MCF 10A (cell line): ENCODE measurements at regions of chr11 and their contacts with region 1.

Region 1: DNA sequence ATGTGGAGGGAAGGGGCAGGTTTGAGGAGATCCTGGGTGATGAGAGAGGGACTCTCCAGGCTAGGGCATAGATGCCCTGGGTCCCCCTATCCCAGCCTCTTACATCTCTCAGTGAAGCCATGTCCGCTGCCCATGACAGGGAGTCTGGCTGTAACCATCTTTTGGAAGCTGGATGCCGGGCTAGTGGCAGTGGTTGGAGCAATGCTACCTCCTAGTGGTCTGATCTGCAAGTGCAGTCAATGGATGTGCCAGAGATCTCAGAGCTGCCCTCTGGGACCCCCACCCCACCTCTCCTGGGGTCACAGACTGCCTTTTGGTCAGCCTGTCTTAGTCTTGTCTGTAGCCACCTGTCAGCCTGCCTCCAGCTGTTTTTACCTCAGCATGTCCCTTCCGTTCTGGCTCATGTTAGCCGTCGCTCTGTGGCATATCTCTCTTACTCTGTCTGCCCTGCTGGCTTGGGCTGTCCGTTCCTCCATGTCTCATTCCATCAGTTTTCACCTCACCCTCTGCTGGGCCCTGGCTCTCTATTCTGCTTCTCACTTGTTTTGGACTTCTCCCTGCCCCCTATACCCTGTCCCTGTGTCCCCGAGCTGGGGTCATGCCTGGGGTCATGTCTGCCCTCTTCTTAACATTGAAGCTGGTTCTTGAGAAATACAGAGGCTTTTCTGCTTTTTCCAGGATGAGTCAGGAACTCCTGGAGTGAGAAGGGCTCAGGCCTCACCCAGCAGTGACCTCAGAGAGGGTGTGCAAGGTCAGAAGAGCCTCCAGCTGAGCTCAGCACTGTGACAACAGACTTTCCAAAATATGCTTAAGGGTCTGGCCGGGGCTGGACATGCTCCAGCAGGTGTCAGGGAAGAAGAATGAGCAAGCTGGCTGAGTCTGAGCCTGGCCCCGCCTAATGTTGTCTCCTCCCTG is 52.0 kb upstream of the THY1 start:
- DNase-seq: peak; percentile 81
- H3K4me3 Mint-ChIP-seq: peak overlapping the region; percentile 7
- H3K27ac Mint-ChIP-seq: peak overlapping the region; percentile 57
- H3K4me1 Mint-ChIP-seq: peaks cover 27% of the 10 kb centered on the region
- H3K27me3 Mint-ChIP-seq: peaks cover 11% of the 10 kb centered on the region
- CTCF ChIP-seq: peak; percentile 94

Region 2: GRCh38 chr11:119334174-119334930 is 140.6 kb before region 1 on chr11 and contains the start of gene RNF26:
- CTCF ChIA-PET with region 1: interaction called, 10 read pairs
- POLR2A ChIA-PET with region 1: no interaction called
- intact Hi-C with region 1: no loop called
- DNase-seq: peak; percentile 99
- H3K4me3 Mint-ChIP-seq: peak within 1 kb of the TSS; percentile 86
- H3K27ac Mint-ChIP-seq: peak within 1 kb of the TSS; percentile 89
- H3K4me1 Mint-ChIP-seq: peaks cover 30% of the 10 kb centered on the region
- H3K27me3 Mint-ChIP-seq: peaks cover 16% of the 10 kb centered on the region
- CTCF ChIP-seq: no peak
- total RNA-seq, gene RNF26: 19.2 and 20.9 TPM in 2 replicates

Region 3: GRCh38 chr11:119363851-119364590 is 110.9 kb before region 1 on chr11:
- CTCF ChIA-PET with region 1: interaction called, 17 read pairs
- POLR2A ChIA-PET with region 1: interaction called, 6 read pairs
- intact Hi-C with region 1: no loop called
- DNase-seq: no peak
- H3K4me3 Mint-ChIP-seq: no peak overlapping the region
- H3K27ac Mint-ChIP-seq: no peak overlapping the region
- H3K4me1 Mint-ChIP-seq: peaks cover 73% of the 10 kb centered on the region
- H3K27me3 Mint-ChIP-seq: no peaks in the 10 kb centered on the region
- CTCF ChIP-seq: no peak

Region 4: GRCh38 chr11:119381181-119381988 is 93.6 kb before region 1 on chr11 and contains the start of gene USP2:
- CTCF ChIA-PET with region 1: interaction called, 56 read pairs
- POLR2A ChIA-PET with region 1: interaction called, 11 read pairs
- intact Hi-C with region 1: loop called (anchors 1 kb)
- DNase-seq: peak; percentile 95
- H3K4me3 Mint-ChIP-seq: no peak within 1 kb of the TSS
- H3K27ac Mint-ChIP-seq: no peak within 1 kb of the TSS
- H3K4me1 Mint-ChIP-seq: peaks cover 10% of the 10 kb centered on the region
- H3K27me3 Mint-ChIP-seq: no peaks in the 10 kb centered on the region
- CTCF ChIP-seq: peak; percentile 72
- total RNA-seq, gene USP2: 0.14 and 0.54 TPM in 2 replicates

Region 5: DNA sequence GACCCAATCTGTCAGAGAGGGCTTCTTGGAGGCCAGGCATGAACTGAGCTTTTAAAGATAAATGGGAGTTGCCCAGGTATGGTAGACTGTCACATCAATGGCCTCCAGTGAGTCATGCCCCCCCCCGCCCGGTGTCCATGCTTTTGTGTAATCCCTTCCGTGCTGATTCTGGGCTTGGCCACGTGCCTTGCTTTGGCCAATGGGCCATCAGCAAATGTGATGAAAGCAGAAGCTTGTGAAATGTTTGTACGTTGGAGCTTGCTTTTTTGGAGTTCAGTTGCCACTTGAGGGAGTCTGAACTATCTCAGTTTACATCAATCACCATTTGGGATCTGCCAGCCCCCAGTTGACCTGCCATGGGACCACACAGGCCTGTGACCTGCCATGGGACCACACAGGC is 47.7 kb before region 1 on chr11:
- CTCF ChIA-PET with region 1: interaction called, 15 read pairs
- POLR2A ChIA-PET with region 1: interaction called, 7 read pairs
- intact Hi-C with region 1: loop called (anchors 2 kb)
- DNase-seq: peak; percentile 89
- H3K4me3 Mint-ChIP-seq: peak overlapping the region; percentile 13
- H3K27ac Mint-ChIP-seq: peak overlapping the region; percentile 61
- H3K4me1 Mint-ChIP-seq: peaks cover 31% of the 10 kb centered on the region
- H3K27me3 Mint-ChIP-seq: peaks cover 4% of the 10 kb centered on the region
- CTCF ChIP-seq: no peak